Activated CD8-positive, alpha-beta T cell treated with anti-CD3 and anti-CD28 coated beads for 36 hours (primary cell): ENCODE measurements at regions of chr16 and their contacts with region 1.

Region 1: GRCh38 chr16:10509534-10510025 is 70.8 kb downstream of the EMP2 start:
- DNase-seq: peak; percentile 61
- ATAC-seq: peak; percentile 91
- H3K4me3 Mint-ChIP-seq: no peak overlapping the region
- H3K27ac Mint-ChIP-seq: no peak overlapping the region
- H3K4me1 Mint-ChIP-seq: peaks cover 14% of the 10 kb centered on the region
- H3K27me3 Mint-ChIP-seq: peaks cover 2% of the 10 kb centered on the region
- CTCF ChIP-seq: peak; percentile 83

Region 2: DNA sequence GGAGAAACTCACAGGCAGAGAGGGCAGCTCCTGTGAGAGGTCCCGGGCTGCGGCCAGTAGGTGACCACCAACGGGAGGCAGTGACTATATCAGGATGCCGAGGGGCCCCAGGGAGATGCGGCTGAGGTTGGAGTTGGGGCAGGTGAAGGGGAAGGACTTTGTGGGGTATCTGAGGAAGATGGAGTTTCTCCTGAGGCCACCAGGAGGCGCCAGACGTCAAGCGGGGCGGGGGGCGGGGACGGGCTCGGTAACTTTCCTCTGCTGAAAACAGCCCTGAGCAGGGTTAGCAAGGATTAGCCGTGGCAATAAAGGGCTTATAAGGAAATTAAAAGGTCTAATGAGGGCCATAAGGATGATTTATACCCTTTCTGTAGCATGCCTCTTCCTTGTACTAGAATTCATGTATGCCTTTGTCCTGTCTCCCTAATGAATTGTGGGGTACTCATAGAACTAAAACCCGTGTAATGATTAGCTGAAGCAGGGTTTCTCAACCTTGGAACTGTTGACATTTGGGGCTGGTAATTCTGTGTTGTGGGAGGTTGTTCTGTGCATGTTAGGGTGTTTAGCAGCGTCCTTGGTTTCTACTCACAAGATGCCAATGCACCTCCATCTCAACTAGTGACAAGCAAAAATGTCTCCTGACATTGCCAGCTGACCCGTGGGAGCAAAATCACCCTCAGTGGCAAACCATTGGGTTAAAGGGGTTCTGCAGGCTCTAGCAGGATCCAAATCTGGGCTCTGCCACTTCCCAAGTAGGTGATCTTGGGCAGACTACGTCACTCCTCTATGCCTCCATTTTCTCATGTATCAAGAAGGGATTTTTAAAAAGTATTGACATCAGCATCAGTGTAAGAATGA is 252.6 kb before region 1 on chr16:
- CTCF ChIA-PET with region 1: interaction called, 31 read pairs
- POLR2A ChIA-PET with region 1: no interaction called
- intact Hi-C with region 1: loop called (anchors 1 kb)
- DNase-seq: peak; percentile 56
- ATAC-seq: peak; percentile 79
- H3K4me3 Mint-ChIP-seq: no peak overlapping the region
- H3K27ac Mint-ChIP-seq: no peak overlapping the region
- H3K4me1 Mint-ChIP-seq: peaks cover 3% of the 10 kb centered on the region
- H3K27me3 Mint-ChIP-seq: peaks cover 3% of the 10 kb centered on the region
- CTCF ChIP-seq: peak; percentile 74

Region 3: GRCh38 chr16:10314811-10315210 is 194.8 kb before region 1 on chr16:
- CTCF ChIA-PET with region 1: interaction called, 51 read pairs
- POLR2A ChIA-PET with region 1: no interaction called
- intact Hi-C with region 1: loop called (anchors 2 kb)
- DNase-seq: peak; percentile 16
- ATAC-seq: peak; percentile 60
- H3K4me3 Mint-ChIP-seq: no peak overlapping the region
- H3K27ac Mint-ChIP-seq: no peak overlapping the region
- H3K4me1 Mint-ChIP-seq: peaks cover 12% of the 10 kb centered on the region
- H3K27me3 Mint-ChIP-seq: no peaks in the 10 kb centered on the region
- CTCF ChIP-seq: peak; percentile 42

Region 4: DNA sequence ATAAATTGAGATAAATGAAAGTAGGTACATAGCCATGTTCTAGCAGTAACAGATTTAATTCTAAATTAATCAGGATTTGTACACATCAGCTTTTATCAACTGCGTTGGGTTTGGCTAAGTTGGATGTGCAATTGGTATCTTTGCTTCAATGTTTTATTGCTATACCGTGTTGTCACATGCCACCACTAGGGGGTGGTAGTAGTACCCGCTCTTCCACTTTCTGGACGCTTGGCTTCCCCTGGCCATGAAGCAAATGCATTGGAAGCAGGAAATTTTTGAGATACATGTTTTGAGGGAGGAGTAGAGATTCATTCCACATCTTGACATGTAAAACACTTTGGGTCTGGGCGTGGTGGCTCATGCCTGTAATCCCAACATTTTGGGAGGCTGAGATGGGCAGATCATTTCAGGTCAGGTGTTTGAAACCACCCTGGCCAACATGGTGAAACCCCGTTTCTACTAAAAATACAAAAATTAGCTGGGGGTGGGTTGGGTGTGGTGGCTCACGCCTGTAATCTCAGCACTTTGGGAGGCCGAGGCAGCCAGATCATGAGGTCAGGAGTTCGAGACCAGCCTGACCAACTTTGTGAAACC is 12.2 kb after region 1 on chr16:
- CTCF ChIA-PET with region 1: interaction called, 11 read pairs
- POLR2A ChIA-PET with region 1: no interaction called
- intact Hi-C with region 1: no loop called
- DNase-seq: peak; percentile 61
- ATAC-seq: peak; percentile 65
- H3K4me3 Mint-ChIP-seq: no peak overlapping the region
- H3K27ac Mint-ChIP-seq: no peak overlapping the region
- H3K4me1 Mint-ChIP-seq: peaks cover 2% of the 10 kb centered on the region
- H3K27me3 Mint-ChIP-seq: peaks cover 9% of the 10 kb centered on the region
- CTCF ChIP-seq: peak; percentile 71

Region 5: DNA sequence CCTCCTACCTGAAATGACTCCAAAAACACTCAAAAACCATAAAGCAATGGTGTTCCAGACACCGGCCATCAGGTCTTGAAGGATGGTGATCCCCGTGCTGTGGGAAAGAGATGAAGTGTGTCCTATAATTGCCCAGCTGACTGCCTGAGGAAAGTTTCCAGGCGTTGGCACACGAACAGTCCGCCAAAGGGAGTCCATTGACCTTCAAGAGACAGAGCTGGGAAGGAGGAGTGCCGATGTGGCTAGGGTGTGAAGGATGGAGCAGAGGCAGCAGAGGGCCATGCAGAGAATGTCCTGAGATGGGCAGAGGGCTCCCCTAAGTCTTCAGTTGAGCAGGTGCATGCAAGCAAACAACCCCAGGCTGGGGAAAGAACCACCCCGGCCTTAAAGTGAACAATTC is 222.2 kb after region 1 on chr16:
- CTCF ChIA-PET with region 1: interaction called, 74 read pairs
- POLR2A ChIA-PET with region 1: no interaction called
- intact Hi-C with region 1: loop called (anchors 2 kb)
- DNase-seq: no peak
- ATAC-seq: no peak
- H3K4me3 Mint-ChIP-seq: no peak overlapping the region
- H3K27ac Mint-ChIP-seq: no peak overlapping the region
- H3K4me1 Mint-ChIP-seq: no peaks in the 10 kb centered on the region
- H3K27me3 Mint-ChIP-seq: no peaks in the 10 kb centered on the region
- CTCF ChIP-seq: no peak

Region 6: GRCh38 chr16:10737068-10737625 is 227.6 kb after region 1 on chr16:
- CTCF ChIA-PET with region 1: interaction called, 74 read pairs
- POLR2A ChIA-PET with region 1: interaction called, 3 read pairs
- intact Hi-C with region 1: loop called (anchors 2 kb)
- DNase-seq: peak; percentile 68
- ATAC-seq: peak; percentile 63
- H3K4me3 Mint-ChIP-seq: peak overlapping the region; percentile 33
- H3K27ac Mint-ChIP-seq: peak overlapping the region; percentile 59
- H3K4me1 Mint-ChIP-seq: peaks cover 32% of the 10 kb centered on the region
- H3K27me3 Mint-ChIP-seq: no peaks in the 10 kb centered on the region
- CTCF ChIP-seq: peak; percentile 93